ENCODE measurements at regions of chr16 and their contacts with region 1.

Region 1: GRCh38 chr16:71484006-71484893 is 4.9 kb downstream of the ZNF19 start:
- DNase-seq: peak; percentile 72
- ATAC-seq: peak; percentile 85
- H3K4me3 Mint-ChIP-seq: peak overlapping the region; percentile 89
- H3K27ac Mint-ChIP-seq: peak overlapping the region; percentile 85
- H3K4me1 Mint-ChIP-seq: peaks cover 18% of the 10 kb centered on the region
- H3K27me3 Mint-ChIP-seq: no peaks in the 10 kb centered on the region

Region 2: DNA sequence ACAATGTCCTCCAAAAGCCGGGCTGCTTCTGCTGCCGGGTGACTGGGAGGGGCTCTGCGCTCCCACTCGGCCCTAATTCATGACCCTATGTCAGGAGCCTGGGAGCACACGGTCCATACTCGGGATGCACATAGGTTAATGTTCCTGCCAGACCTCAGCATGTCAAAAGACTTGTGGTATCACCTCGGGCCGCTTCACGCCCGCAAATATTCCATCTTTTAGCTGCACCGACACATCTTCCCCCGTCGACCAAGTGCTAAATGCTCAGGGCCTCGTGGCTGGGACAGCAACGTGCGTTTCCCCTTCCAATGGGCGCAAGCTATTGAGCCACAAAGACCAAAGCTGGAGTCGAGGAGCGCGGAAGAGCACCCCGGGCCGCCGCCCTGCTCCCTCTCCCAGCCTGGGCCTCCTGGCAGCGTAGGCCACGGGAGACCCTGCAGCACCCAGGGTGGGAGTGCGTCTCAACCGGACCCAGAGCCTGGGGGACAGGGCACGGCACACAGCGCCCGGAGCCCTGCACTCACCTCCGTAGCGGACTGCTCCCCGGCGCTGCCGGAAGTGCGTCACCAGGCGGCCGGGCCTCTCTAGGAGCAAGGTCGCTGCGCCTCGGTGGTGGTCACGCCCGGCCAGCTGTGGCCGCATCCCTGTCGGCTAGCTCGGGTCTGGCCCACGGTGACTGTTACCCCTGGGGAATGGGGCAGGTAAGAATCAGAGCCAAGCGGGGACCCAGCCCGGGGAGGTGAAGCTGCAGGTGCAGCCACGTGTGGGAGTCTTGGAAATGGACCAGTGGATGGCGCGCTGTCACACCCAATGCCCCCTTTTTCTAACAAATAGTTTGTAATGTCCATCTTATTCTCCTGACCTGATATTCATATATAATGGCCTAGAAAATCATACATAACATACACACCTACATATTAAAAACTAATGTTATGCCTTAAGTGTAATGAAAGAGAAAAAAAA is 22.3 kb before region 1 on chr16 and contains the start of gene ZNF23:
- POLR2A ChIA-PET with region 1: interaction called, 16 read pairs
- DNase-seq: peak; percentile 87
- ATAC-seq: peak; percentile 97
- H3K4me3 Mint-ChIP-seq: peak within 1 kb of the TSS; percentile 91
- H3K27ac Mint-ChIP-seq: peak within 1 kb of the TSS; percentile 92
- H3K4me1 Mint-ChIP-seq: peaks cover 22% of the 10 kb centered on the region
- H3K27me3 Mint-ChIP-seq: peaks cover 3% of the 10 kb centered on the region
- total RNA-seq, gene ZNF23: 9.6 to 10.5 TPM